ENCODE measurements at regions of chr16 and their contacts with region 1.

Region 1: GRCh38 chr16:1474796-1475551 is at the start of gene CLCN7:
- DNase-seq: peak; percentile 87 to 93 (median 90)
- H3K4me3 ChIP-seq: peak within 1 kb of the TSS; percentile 68
- H3K27ac ChIP-seq: peak within 1 kb of the TSS; percentile 79 to 91
- H3K4me1 ChIP-seq: peaks cover 11% of the 10 kb centered on the region
- H3K27me3 ChIP-seq: no peaks in the 10 kb centered on the region
- CTCF ChIP-seq: no peak
- EP300 ChIP-seq: peak; percentile 55
- POLR2A ChIP-seq: peak; percentile 87
- total RNA-seq, gene CLCN7: 28.4 to 70.9 (median 62.8) TPM

Region 2: GRCh38 chr16:1691276-1691675 is 216.3 kb after region 1 on chr16:
- intact Hi-C with region 1: loop called in 1 of 4 experiments (anchors 10 kb)
- DNase-seq: no peak
- H3K4me3 ChIP-seq: no peak overlapping the region
- H3K27ac ChIP-seq: no peak overlapping the region
- H3K4me1 ChIP-seq: no peaks in the 10 kb centered on the region
- H3K27me3 ChIP-seq: no peaks in the 10 kb centered on the region
- CTCF ChIP-seq: no peak
- EP300 ChIP-seq: no peak
- POLR2A ChIP-seq: no peak

Measured in ovary (tissue), 10 donors.